Common myeloid progenitor, CD34-positive (primary cell): ENCODE measurements at regions of chr6 and their contacts with region 1.

Region 1: GRCh38 chr6:136846046-136846445 is 23.7 kb downstream of the PEX7 start:
- DNase-seq: peak; percentile 78 to 90 (median 87)
- H3K4me3 ChIP-seq: no peak overlapping the region
- H3K27ac ChIP-seq: no peak overlapping the region
- H3K4me1 ChIP-seq: no peaks in the 10 kb centered on the region
- H3K27me3 ChIP-seq: no peaks in the 10 kb centered on the region

Region 2: DNA sequence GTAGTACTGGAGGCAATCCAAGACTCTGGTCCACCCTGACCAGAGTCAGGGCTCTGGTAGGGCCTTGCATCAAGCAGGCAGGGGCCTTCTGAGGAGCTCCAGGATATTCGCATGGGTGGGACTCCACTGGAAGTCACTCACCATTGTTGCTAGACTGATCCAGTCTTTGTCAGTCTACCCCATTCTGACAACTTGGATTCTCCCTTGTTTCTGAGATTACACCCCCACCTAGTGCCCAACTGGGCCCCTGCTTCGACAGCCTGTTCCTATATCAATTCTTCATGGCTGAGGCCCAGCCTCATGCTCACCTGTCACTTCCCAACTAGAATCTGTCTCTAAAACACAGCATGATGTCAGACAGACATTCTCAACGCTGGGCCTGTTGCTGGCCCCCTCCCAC is 81.2 kb after region 1 on chr6:
- CTCF ChIA-PET with region 1: interaction called, 36 read pairs
- POLR2A ChIA-PET with region 1: no interaction called
- DNase-seq: peak; percentile 30 to 61 (median 57)
- H3K4me3 ChIP-seq: no peak overlapping the region
- H3K27ac ChIP-seq: no peak overlapping the region
- H3K4me1 ChIP-seq: peaks cover 0 to 15% (median 13%) of the 10 kb centered on the region in 4 experiments
- H3K27me3 ChIP-seq: peaks cover 8 to 51% (median 21%) of the 10 kb centered on the region in 5 experiments